ENCODE measurements at regions of chr3 and their contacts with region 1.

Region 1: DNA sequence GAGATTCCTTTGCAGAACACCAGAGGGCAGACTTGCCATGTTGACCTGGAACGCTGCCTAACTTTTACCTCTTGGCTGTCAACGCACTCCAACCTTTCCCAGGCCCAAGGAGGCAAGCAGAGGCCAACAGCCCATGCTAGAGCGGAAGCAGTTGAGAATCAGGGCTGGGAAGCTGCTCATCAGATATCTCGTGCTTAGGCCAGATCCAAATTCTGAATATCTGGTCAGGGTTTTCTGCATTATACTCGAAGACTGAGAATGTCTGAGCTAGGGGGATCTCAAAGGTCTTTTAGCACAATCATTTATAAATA is 2.5 kb downstream of the XIRP1 start:
- DNase-seq: peak; percentile 37
- H3K4me3 ChIP-seq: no peak overlapping the region
- CTCF ChIP-seq: peak; percentile 77

Region 2: DNA sequence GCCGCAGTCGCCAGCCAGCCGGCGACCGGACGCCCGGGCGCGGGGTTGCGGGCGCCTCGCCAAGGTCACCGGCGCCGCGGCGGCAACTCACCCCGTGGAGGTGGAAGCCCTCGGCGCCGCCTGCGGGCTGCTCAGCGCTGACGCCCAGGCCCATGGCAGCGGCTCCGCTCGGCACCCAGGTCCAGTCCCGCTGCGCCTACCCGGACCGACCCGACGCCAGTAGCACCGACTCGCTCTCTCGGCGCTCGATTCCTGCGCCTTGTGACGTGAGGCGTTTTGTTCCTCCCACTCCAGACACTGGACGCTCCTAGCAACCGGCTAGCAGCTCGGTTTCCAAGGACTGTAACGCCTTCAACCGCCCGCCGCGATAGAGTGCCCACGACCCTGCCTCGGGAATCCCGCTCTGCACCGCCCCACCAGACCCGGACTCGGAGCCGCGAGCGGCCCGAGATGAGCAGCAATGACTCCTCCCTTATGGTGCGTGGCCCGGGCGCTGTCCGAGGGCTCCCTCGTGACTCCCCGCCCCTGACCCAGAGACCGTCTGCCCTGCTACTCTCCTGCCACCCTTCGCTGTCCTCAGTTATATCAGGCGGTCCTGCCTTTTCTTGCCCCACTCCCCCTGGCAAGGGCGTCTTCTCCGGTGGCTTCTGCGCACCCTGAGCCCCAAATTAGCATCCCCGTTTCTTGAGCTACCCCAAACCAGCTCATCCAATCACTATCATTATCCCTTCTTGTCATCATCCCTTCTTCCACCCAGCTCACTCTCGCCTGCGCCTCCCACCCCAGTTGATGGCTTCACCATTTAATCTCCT is 82.3 kb before region 1 on chr3 and contains the starts of genes GORASP1 and TTC21A:
- in situ Hi-C with region 1: loop called (anchors 5 kb)
- DNase-seq: peak; percentile 74
- H3K4me3 ChIP-seq: peak within 1 kb of the TSS; percentile 91
- CTCF ChIP-seq: no peak

Region 3: DNA sequence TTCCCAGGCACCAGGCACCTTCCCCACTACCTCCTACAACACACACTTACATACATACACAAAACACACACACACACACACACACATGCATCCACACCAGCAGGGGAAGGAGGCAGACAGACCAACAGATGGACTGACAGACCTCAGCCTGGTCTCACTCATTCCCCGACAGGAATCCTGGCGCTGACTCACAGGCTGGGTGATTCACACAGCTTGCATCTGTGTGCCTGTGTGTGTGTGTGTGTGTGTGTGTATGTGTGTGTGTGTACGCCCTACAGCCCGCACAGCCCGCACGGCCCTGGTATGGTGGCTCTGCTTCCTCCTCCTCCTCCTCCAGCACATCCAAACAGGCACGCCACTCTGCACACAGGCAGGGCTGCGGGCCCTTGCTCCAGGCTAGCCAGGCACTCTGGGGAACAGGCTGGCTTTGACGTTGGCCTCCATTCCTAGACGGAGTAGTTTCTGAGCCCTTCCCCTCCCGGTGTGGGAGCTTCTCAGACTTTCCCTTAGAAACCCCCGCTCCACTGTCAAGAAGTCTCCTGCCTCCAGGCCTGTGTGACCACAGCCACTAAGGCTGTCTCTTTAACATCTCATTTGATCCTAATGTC is 42.8 kb before region 1 on chr3:
- in situ Hi-C with region 1: no loop called
- DNase-seq: peak; percentile 77
- H3K4me3 ChIP-seq: no peak overlapping the region
- CTCF ChIP-seq: no peak

Region 4: GRCh38 chr3:39291903-39292329 is 102.0 kb after region 1 on chr3:
- in situ Hi-C with region 1: loop called (anchors 5 kb)
- DNase-seq: peak; percentile 12
- H3K4me3 ChIP-seq: no peak overlapping the region
- CTCF ChIP-seq: peak; percentile 94

Region 5: DNA sequence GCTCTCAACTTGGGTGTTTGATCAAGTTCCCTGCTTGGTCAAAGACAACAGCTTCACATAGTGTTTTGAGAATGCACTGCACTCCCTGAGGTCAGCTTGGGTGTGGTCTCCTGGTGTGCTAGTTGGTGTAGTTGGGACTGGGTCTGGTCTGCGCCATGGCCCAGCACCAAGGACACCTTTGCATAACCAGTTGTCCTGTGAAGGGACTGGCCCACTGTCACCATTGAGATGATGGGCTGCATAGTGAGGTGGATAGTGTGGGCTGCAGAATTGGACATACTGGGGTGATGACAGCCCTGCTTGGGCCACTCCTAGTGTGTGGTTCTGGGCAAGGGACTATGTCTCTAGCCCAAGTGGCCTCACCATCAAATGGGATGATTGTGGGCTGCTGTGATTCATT is 226.1 kb after region 1 on chr3:
- in situ Hi-C with region 1: no loop called
- DNase-seq: no peak
- H3K4me3 ChIP-seq: no peak overlapping the region
- CTCF ChIP-seq: no peak

Measured in astrocyte of the cerebellum (primary cell).